ENCODE measurements at regions of chr2 and their contacts with region 1.

Region 1: GRCh38 chr2:24792874-24793760 is at the starts of genes CENPO and PTRHD1:
- H3K4me3 ChIP-seq: peak within 1 kb of the TSS; percentile 99
- H3K27ac ChIP-seq: peak within 1 kb of the TSS; percentile 90
- H3K4me1 ChIP-seq: peaks cover 9% of the 10 kb centered on the region; the same call in 1 of the 2 replicates
- CTCF ChIP-seq: peak; percentile 94

Region 2: DNA sequence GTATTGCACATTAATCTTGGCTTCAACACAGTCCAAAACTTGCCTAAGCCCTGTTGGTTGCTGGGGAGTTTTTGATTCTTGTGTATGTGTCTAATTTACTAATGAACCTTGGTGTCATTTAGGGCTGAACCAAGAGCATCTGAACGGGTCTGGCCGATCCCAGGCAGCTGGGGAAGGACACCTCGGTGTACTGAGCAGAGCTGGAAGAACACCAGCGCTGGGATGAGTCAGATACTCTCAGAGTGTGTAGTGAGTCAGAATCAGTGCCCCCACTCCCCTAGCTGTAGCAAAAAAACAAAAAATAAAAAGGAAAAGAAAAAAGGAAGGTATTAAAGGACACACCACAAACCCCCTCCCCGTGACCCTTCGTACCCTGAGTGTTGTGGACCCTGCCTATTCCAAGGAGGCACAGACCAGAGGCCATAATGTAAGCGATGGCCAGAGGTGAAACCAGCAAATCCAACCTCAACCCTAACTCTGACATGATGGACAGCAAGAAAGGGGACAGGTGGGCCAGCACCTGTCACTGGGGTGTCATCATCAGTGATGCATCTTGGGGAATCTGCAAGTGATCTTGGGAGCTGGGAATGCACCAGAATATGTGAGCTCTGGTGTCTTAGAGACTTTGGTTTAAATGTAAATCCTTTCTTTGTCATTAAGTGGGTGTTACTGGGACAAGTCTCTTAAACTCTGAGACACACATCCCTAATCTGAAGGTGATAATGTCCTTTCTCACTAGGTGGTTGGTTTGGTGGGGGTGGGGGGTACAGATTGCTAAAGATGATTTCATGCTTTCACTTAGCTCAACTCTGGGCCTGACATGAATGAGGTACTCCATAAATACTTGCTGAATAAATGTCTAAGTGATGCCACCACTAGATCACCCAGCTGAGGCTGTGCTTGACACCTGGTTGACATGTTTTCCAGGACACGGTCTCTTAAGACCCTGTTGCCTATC is 336.2 kb before region 1 on chr2:
- CTCF ChIA-PET with region 1: no interaction called
- POLR2A ChIA-PET with region 1: no interaction called
- H3K4me3 ChIP-seq: no peak overlapping the region
- H3K27ac ChIP-seq: no peak overlapping the region
- H3K4me1 ChIP-seq: no peaks in the 10 kb centered on the region
- CTCF ChIP-seq: no peak

Region 3: DNA sequence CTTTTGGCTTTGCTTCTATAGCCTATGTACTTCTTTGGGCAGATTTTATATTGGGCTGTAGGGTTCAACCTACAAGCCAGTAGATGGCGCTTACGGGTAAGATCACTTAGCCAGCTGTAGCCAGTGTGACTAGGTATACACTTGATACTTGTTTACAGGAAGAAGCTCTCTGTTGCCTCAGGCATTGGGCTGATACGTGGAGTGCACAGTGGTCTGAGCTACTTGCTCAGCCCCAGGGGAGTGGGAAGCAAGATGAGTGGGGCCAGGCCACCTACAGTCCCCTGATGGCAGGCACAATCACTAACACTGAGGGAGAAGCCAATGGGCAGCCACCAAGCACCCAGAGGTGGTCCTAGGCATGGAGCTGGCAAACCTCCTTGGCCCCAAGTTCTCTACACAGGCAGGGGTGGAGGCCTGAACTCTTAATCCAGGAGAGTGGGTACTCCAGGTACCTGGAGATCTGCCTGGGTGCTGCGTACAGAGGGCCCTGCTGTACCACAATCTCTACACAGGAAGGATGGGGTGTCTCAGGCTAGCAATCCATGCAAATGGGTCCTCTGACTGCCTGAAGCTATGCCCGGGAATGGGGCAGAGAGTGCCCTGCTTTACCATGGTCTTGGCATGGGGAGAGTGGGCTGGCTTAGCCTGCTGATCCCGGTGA is 179.8 kb before region 1 on chr2:
- CTCF ChIA-PET with region 1: interaction called, 15 read pairs
- POLR2A ChIA-PET with region 1: interaction called, 3 read pairs
- H3K4me3 ChIP-seq: no peak overlapping the region
- H3K27ac ChIP-seq: no peak overlapping the region
- H3K4me1 ChIP-seq: peaks cover 14% of the 10 kb centered on the region; the same call in 1 of the 2 replicates
- CTCF ChIP-seq: no peak

Region 4: GRCh38 chr2:25586726-25587144 is 793.6 kb after region 1 on chr2:
- CTCF ChIA-PET with region 1: no interaction called
- POLR2A ChIA-PET with region 1: no interaction called
- H3K4me3 ChIP-seq: no peak overlapping the region
- H3K27ac ChIP-seq: no peak overlapping the region
- H3K4me1 ChIP-seq: peaks cover 17% of the 10 kb centered on the region
- CTCF ChIP-seq: no peak

Measured in HEK293 (cell line).